PC-9 (cell line): ENCODE measurements at regions of chr11 and their contacts with region 1.

Region 1: DNA sequence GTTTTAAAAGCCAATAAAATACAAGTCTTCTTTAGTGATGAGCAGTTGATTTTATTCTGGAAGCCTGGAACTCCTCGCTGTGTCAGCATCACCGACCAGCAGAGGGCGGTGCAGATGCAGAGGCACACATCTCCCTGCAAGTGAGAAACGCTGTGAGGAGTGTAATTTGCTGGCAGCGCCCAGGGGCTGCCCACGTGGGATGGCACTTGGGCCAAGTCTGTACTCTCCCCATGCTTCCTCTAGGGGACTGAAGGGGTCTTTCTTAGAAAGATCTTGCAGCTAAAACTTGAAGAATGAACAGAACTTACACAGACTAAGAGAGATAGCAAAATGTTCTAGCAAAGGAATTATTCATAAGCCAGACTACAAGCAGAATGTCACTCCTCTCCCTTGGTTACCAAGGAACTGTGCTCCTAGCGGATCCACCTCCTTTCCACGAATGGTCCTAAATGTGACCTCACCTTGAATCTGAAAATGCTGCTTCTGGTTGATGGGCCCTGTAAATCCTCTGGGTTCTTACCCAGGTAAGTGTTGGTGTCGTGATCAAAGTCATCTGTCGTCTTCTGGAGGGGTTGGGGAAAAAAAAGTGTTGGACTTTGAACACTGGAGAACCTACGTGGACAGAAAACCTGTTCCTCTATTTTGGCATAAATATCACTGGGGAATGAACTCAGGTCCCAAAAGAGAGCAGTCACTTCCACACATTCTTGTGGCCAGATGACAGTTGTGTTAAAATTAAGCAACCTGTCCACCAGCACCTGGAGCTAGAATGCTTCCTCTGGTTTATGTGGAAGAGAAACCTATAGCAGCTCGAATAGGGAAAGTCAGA is 31.8 kb downstream of the CNTF start:
- DNase-seq: peak; percentile 64 to 77
- H3K4me3 ChIP-seq: no peak overlapping the region
- H3K27ac ChIP-seq: no peak overlapping the region
- H3K4me1 ChIP-seq: peaks cover 30% of the 10 kb centered on the region
- H3K27me3 ChIP-seq: no peaks in the 10 kb centered on the region
- CTCF ChIP-seq: peak; percentile 96

Region 2: GRCh38 chr11:58675334-58676155 is 21.3 kb after region 1 on chr11:
- CTCF ChIA-PET with region 1: interaction called, 5 read pairs
- POLR2A ChIA-PET with region 1: no interaction called
- intact Hi-C with region 1: loop called (anchors 1 kb)
- DNase-seq: peak; percentile 59 to 76
- H3K4me3 ChIP-seq: no peak overlapping the region
- H3K27ac ChIP-seq: no peak overlapping the region
- H3K4me1 ChIP-seq: no peaks in the 10 kb centered on the region
- H3K27me3 ChIP-seq: no peaks in the 10 kb centered on the region
- CTCF ChIP-seq: peak; percentile 97

Region 3: GRCh38 chr11:58719406-58720117 is 65.3 kb after region 1 on chr11:
- CTCF ChIA-PET with region 1: no interaction called
- POLR2A ChIA-PET with region 1: no interaction called
- intact Hi-C with region 1: no loop called
- DNase-seq: no peak
- H3K4me3 ChIP-seq: no peak overlapping the region
- H3K27ac ChIP-seq: no peak overlapping the region
- H3K4me1 ChIP-seq: no peaks in the 10 kb centered on the region
- H3K27me3 ChIP-seq: no peaks in the 10 kb centered on the region
- CTCF ChIP-seq: no peak

Region 4: DNA sequence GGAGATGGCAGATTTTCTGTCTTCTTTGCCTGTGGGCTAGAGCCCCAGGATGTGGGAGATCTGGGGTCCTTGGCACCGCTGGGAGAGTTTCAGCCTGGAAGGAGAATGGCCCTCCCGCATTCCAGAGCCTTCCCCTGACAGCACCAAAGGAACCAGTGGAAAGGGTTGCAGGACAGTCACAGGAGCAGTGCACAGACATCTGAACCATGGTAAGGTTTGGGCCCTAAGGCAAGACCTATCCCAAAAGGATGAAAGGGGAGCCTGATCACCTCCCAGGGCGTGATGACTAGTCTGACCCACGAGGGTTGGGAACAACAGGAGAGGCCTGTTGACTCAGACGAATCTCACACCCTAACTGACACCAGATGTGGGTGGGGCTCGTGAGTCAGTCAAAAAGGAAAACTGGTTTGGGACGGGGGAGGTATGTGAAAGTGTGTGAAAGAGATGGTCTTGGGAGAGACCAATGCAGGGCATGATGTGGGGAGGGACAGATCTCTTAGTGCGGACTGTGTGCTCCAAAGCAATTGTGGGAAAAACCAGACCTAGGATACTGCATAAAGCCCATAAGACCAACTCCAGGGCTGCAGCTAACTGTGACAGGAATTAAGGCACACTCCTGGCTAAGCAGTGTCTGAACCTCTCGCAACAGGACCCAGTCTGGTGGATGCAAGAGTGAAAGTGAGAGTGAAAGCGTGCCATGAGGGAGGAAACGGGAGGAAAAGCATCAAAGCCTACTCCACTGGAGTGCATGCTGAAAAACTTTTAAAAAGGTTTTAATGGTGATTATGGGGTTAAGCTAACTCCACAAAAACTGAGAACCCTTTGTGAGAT is 116.5 kb after region 1 on chr11:
- CTCF ChIA-PET with region 1: no interaction called
- POLR2A ChIA-PET with region 1: no interaction called
- intact Hi-C with region 1: loop called (anchors 5 kb)
- DNase-seq: peak; percentile 66 to 89
- H3K4me3 ChIP-seq: no peak overlapping the region
- H3K27ac ChIP-seq: peak overlapping the region; percentile 81
- H3K4me1 ChIP-seq: peaks cover 33% of the 10 kb centered on the region
- H3K27me3 ChIP-seq: no peaks in the 10 kb centered on the region
- CTCF ChIP-seq: no peak

Region 5: DNA sequence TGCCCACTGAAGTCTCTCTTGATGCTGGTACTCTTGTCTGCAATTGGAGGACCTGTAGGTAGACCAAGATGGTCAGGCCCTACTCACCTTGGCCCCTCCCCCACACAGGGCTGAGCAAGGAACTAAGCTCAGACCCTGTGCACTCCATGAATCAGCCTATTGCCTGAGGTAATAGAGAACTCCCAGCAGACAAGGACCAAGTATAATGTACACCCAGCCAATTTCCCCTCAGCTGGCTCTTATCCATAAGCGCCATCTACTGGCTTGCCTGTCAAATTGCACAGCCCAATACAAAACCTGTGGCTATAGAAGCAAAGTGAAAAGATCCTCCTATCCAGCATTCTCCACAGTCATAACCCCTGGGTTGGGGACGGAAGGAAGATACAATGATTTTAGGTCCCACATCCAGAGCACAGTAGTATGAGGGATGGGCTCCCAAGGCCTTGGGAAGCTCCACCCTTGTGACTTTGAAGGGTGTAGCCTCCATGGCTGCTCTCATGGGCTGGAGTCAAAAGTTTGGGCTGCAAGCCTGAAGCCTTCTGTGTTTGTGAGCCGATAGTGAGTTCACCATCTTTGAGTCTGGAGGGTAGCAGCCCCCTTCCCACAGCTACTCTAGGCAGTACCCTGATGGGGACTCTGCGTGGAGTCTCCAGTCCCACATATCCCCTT is 134.2 kb after region 1 on chr11:
- CTCF ChIA-PET with region 1: no interaction called
- POLR2A ChIA-PET with region 1: no interaction called
- intact Hi-C with region 1: loop called (anchors 1 kb)
- DNase-seq: peak; percentile 31 to 67
- H3K4me3 ChIP-seq: no peak overlapping the region
- H3K27ac ChIP-seq: peak overlapping the region; percentile 7; the same call in 1 of the 2 replicates
- H3K4me1 ChIP-seq: 0 out of 2 replicates have a peak, but pooled peaks cover 8% of the 10 kb centered on the region
- H3K27me3 ChIP-seq: no peaks in the 10 kb centered on the region
- CTCF ChIP-seq: peak; percentile 94

Region 6: DNA sequence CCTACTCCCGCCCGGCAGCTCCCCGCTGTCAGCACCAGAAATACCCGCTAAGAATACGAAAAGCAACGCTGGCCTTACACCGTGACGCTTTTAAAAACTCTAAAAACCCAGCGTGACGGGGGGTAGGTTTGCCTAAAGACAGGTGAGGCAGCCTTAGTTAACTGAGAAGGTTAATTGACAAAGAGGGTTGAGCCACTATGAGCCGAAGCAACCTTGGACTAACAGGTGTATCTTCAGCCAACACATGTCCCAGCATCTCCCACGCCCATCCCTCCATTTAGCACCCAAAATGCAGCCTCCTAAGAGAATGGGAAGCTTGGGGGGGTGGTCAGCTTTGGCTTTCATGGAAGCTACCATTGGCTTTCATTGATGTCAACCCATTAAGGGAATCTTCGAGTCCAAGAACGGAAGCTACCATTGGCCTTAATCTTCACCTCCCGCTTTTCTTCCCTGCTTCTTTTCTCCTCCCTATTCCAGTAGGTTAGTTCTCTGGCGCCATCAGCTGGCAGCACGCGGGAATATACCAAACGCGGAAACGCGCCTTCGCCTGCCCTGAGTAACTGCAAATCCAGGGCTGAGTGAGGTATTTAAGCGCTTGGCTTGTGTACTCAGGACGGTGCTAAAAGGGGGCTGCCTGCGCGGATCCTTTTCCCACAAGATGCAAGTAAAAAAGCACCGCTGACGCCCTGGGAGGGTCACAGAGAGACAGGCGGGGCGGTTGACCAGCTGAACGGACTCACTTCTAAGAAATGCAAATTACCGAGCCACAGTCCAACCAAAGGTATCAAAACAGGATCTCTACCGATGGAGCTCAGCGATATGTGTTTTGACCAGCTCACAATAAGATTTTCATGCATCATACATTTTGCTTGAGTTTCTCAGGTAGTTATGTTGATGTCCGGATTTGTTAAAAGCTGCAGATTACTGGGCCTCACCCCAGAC is 246.5 kb after region 1 on chr11:
- CTCF ChIA-PET with region 1: interaction called, 3 read pairs
- POLR2A ChIA-PET with region 1: interaction called, 4 read pairs
- intact Hi-C with region 1: loop called (anchors 10 kb)
- DNase-seq: peak; percentile 40 to 66
- H3K4me3 ChIP-seq: no peak overlapping the region
- H3K27ac ChIP-seq: no peak overlapping the region
- H3K4me1 ChIP-seq: no peaks in the 10 kb centered on the region
- H3K27me3 ChIP-seq: peaks cover 4% of the 10 kb centered on the region; the same call in 1 of the 2 replicates
- CTCF ChIP-seq: peak; percentile 63

Region 7: DNA sequence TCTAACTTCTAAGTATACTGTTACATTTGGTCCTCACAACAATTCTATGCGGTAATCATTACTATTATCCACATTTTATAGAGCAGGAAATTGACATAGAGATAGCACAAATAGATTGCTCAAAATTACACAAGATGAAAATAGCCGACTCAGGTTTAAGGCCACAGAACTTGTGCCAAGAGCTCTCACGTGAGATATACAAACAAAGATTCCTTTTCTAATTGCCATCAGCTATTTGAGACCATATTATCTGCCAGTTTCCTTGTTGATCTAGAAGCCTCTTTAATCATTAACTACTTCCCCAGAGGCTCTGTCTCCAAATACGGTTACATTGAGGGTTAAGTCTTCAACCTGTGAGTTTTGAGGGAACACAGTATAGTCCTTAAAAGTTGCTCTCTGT is 370.8 kb after region 1 on chr11:
- CTCF ChIA-PET with region 1: no interaction called
- POLR2A ChIA-PET with region 1: no interaction called
- intact Hi-C with region 1: no loop called
- DNase-seq: no peak
- H3K4me3 ChIP-seq: no peak overlapping the region
- H3K27ac ChIP-seq: no peak overlapping the region
- H3K4me1 ChIP-seq: no peaks in the 10 kb centered on the region
- H3K27me3 ChIP-seq: peaks cover 52% of the 10 kb centered on the region; the same call in 1 of the 2 replicates
- CTCF ChIP-seq: no peak

Region 8: GRCh38 chr11:59135648-59136461 is 481.6 kb after region 1 on chr11:
- CTCF ChIA-PET with region 1: no interaction called
- POLR2A ChIA-PET with region 1: no interaction called
- intact Hi-C with region 1: loop called (anchors 1 kb)
- DNase-seq: peak; percentile 43 to 78
- H3K4me3 ChIP-seq: no peak overlapping the region
- H3K27ac ChIP-seq: no peak overlapping the region
- H3K4me1 ChIP-seq: no peaks in the 10 kb centered on the region
- H3K27me3 ChIP-seq: no peaks in the 10 kb centered on the region
- CTCF ChIP-seq: peak; percentile 94

Region 9: GRCh38 chr11:59158206-59159068 is 504.1 kb after region 1 on chr11:
- CTCF ChIA-PET with region 1: no interaction called
- POLR2A ChIA-PET with region 1: no interaction called
- intact Hi-C with region 1: loop called (anchors 1 kb)
- DNase-seq: peak; percentile 53 to 59
- H3K4me3 ChIP-seq: no peak overlapping the region
- H3K27ac ChIP-seq: no peak overlapping the region
- H3K4me1 ChIP-seq: no peaks in the 10 kb centered on the region
- H3K27me3 ChIP-seq: 0 out of 2 replicates have a peak, but pooled peaks cover 15% of the 10 kb centered on the region
- CTCF ChIP-seq: peak; percentile 95